SK-N-SH (cell line): ENCODE measurements at regions of chr9 and their contacts with region 1.

Region 1: DNA sequence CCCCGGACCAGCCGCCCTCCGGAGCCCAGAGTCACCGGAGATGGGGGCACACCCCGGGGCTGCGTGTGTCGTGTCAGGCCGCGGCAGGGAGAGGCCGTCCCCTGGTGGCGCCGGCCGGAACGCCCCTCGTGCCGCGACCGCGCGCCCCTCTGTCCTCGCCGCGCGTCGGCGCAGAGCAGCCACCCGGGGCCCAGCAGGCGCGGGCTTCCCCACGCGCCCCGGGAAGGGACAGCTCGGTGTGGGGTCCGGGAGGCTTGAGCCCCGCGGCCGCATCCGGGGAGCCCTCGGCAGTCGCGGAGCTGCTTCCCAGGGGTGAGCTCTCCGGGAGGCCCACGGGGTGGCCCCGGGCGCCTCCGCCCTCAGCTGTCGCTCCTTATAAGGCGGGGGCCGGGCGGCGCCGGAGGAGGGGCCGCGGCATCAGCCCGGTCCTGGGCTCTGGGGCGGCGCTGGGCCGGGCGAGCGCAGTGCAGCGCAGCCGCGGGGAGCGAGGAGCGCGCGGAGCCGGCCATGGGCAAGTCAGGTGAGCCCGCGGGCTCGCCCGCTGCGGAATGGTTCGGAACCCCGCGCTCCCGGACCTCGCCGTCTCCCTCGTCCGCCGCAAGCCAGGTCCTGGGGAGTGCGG is at the start of gene GLIPR2:
- DNase-seq: peak; percentile 92
- H3K4me3 ChIP-seq: peak within 1 kb of the TSS; percentile 67 to 83
- H3K27ac ChIP-seq: no peak within 1 kb of the TSS; a peak in 1 of 4 replicates
- H3K4me1 ChIP-seq: peaks cover 0 to 21% of the 10 kb centered on the region in 2 experiments; a peak in 3 of 4 replicates
- H3K27me3 ChIP-seq: no peaks in the 10 kb centered on the region
- CTCF ChIP-seq: peak; percentile 40
- EP300 ChIP-seq: no peak
- RAD21 ChIP-seq: no peak; the same call in 1 of the 2 replicates
- polyA plus RNA-seq, gene GLIPR2: 38.3 and 40.1 TPM in 2 replicates

Region 2: DNA sequence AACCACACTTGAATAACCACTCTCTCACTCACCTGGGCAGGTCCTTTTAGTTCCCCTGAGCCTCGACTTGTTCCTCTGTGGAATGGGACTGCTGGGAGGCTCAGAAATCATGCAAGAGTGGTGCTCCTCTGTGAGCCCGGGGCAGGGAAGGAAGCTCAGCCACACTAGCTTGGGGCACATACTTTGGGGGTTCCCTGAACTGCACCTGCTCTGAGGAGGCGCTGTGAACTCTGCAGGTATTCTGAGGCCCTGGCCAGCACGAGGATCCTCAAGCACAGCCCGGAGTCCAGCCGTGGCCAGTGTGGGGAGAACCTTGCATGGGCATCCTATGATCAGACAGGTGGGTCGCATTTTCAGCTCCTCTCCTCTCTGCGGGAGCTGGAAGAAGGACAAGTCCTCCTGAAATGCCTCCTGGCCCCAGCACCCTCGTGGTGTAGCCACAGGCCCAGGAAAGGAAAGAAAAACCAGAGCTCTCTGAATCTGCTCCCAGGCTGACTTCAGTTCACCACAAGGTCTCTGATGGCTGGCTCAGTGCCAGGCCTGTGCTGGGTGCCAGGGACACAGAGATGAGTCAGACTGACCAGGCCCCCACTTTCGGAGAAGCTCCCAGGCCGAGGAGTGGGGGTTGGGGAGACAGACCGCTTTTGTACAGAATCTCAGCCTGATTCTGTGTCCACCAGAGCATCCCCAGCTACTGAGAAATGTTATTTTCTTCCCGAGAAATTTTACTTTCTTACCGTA is 12.1 kb after region 1 on chr9:
- CTCF ChIA-PET with region 1: interaction called, 6 read pairs
- POLR2A ChIA-PET with region 1: interaction called, 10 read pairs
- DNase-seq: peak; percentile 94
- H3K4me3 ChIP-seq: peak overlapping the region in 1 of 2 experiments; percentile 6; a peak in 1 of 4 replicates
- H3K27ac ChIP-seq: peak overlapping the region; percentile 89 to 98
- H3K4me1 ChIP-seq: peaks cover 15 to 41% of the 10 kb centered on the region in 2 experiments; a peak in 3 of 4 replicates
- H3K27me3 ChIP-seq: no peaks in the 10 kb centered on the region
- CTCF ChIP-seq: no peak
- EP300 ChIP-seq: peak; percentile 72 to 87
- RAD21 ChIP-seq: peak; percentile 44